ENCODE measurements at regions of chr11 and their contacts with region 1.

Region 1: GRCh38 chr11:61091373-61092279 is 10.7 kb upstream of the CD5 start:
- DNase-seq: peak; percentile 85
- H3K4me3 Mint-ChIP-seq: peak overlapping the region; percentile 96
- H3K27ac Mint-ChIP-seq: peak overlapping the region; percentile 99
- H3K4me1 Mint-ChIP-seq: peaks cover 72% of the 10 kb centered on the region
- H3K27me3 Mint-ChIP-seq: no peaks in the 10 kb centered on the region

Region 2: GRCh38 chr11:60786811-60787567 is 304.6 kb before region 1 on chr11:
- CTCF ChIA-PET with region 1: no interaction called
- POLR2A ChIA-PET with region 1: no interaction called
- intact Hi-C with region 1: no loop called
- DNase-seq: no peak
- H3K4me3 Mint-ChIP-seq: no peak overlapping the region
- H3K27ac Mint-ChIP-seq: no peak overlapping the region
- H3K4me1 Mint-ChIP-seq: no peaks in the 10 kb centered on the region
- H3K27me3 Mint-ChIP-seq: no peaks in the 10 kb centered on the region

Region 3: DNA sequence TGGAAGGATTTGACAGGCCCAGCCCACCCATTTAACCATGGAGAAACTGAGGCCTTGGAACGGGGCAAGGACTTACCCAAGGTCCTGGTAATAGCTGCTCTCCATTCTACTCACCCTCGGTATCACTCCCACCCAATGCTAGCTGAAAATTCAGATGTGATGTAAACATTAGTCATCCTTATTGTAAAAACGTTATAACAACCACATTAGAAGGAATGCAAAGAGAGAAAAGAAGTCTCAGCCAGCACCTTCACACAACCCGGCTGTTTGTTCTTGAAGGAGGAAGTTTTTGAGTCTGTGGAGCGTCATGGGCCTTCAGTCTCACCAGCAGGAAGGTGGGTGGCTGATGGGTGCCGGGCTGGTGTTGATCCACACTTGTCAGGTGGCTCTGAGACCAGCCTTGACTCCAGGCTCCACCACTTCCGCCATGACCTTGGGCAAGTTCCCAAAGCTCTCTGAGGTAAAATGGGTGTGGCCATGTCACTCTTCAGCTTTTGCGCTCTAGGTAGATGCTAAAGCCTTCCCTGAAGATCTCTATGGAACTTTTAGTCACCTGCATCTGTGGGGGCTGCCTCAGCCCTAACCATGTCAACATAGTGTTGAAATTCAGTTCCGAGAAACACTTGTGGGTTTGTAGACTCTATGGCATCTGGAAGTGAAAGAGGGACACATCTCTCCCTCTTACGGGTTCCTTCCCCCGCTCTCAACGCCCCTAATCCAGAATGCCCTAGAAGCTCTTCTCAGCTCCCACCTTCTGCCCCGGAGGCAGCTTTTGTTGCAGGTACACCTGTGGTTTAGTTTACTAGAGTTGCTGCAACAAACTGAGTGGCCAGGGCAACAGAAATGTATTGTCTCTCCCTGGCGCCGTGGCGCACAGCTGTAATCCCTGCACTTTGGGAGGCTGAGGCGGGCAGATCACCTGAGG is 105.4 kb before region 1 on chr11:
- CTCF ChIA-PET with region 1: interaction called, 4 read pairs
- POLR2A ChIA-PET with region 1: interaction called, 46 read pairs
- intact Hi-C with region 1: no loop called
- DNase-seq: peak; percentile 97
- H3K4me3 Mint-ChIP-seq: peak overlapping the region; percentile 84
- H3K27ac Mint-ChIP-seq: peak overlapping the region; percentile 99
- H3K4me1 Mint-ChIP-seq: peaks cover 91% of the 10 kb centered on the region
- H3K27me3 Mint-ChIP-seq: no peaks in the 10 kb centered on the region

Region 4: DNA sequence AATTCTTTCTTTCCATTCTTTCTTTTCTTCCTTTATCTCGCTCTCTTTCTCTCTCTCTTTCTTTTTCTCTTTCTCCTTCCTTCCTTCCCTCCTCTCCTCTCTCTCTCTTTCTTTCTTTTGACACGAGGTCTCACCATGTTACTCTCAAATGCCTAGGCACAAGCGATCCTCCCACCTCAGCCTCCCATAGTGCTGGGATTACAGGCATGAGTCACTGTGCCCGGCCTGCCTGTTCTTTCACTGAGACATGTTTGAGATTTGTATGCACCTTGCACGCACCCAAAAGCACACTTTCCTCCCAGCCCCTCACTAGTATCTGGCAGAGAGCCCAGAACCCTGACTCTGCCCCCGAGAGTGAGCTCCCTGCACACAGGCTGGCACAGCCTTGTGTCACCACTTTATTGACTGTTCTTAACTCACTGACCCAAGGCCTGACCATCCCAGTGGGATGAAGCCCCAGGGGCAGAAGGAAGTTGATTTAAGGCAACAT is 63.3 kb before region 1 on chr11:
- CTCF ChIA-PET with region 1: interaction called, 4 read pairs
- POLR2A ChIA-PET with region 1: interaction called, 17 read pairs
- intact Hi-C with region 1: no loop called
- DNase-seq: peak; percentile 88
- H3K4me3 Mint-ChIP-seq: peak overlapping the region; percentile 83
- H3K27ac Mint-ChIP-seq: peak overlapping the region; percentile 96
- H3K4me1 Mint-ChIP-seq: peaks cover 77% of the 10 kb centered on the region
- H3K27me3 Mint-ChIP-seq: no peaks in the 10 kb centered on the region

Region 5: GRCh38 chr11:61071208-61071681 is 20.4 kb before region 1 on chr11:
- CTCF ChIA-PET with region 1: interaction called, 7 read pairs
- POLR2A ChIA-PET with region 1: interaction called, 157 read pairs
- intact Hi-C with region 1: no loop called
- DNase-seq: peak; percentile 80
- H3K4me3 Mint-ChIP-seq: peak overlapping the region; percentile 62
- H3K27ac Mint-ChIP-seq: peak overlapping the region; percentile 94
- H3K4me1 Mint-ChIP-seq: peaks cover 89% of the 10 kb centered on the region
- H3K27me3 Mint-ChIP-seq: no peaks in the 10 kb centered on the region

Region 6: DNA sequence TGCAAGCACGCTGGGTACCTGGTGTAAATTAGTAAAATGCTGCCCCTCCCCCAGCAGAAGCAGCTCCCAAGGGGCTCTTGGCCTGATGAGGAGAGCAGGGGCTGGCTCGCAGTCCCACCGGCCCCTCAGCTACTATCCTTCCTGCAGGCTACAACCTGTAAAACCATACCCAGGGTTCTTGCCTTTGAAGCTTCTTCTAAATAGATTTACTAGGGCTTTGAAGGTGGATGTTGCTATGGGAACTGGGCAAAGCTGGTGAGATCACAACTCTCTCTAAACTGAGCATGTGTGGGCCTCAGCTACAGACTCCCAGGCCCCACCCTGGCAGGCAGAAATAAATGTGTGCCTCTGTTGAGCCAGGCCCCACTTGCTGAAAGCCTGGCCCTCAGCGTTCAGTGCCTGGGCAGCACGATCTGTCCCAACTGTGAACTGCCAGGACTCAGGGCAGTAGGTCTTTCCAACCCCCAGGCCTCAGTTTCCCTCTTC is 29.1 kb after region 1 on chr11:
- CTCF ChIA-PET with region 1: interaction called, 3 read pairs
- POLR2A ChIA-PET with region 1: interaction called, 114 read pairs
- intact Hi-C with region 1: no loop called
- DNase-seq: no peak
- H3K4me3 Mint-ChIP-seq: no peak overlapping the region
- H3K27ac Mint-ChIP-seq: peak overlapping the region; percentile 85
- H3K4me1 Mint-ChIP-seq: peaks cover 59% of the 10 kb centered on the region
- H3K27me3 Mint-ChIP-seq: no peaks in the 10 kb centered on the region

Region 7: DNA sequence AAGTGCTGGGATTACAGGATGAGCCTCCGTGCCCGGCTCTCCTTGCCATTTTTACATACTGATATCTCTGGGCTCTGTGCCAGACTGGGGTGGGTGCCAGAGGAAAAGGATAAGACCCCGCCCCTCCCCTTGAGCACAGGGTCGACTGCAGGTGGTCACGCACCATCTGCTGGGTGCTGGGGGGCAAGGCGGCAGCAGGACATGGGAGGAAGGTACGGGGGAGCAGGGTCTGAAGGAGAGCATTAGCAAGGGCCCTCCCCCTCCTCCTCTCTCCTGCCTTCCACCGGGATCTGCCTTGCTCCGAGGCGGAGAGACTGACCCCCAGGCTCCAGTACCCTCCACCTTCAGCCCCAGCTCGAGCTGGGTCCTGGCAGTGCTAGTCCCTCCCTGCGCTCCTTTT is 102.0 kb after region 1 on chr11:
- CTCF ChIA-PET with region 1: no interaction called
- POLR2A ChIA-PET with region 1: no interaction called
- intact Hi-C with region 1: no loop called
- DNase-seq: no peak
- H3K4me3 Mint-ChIP-seq: no peak overlapping the region
- H3K27ac Mint-ChIP-seq: no peak overlapping the region
- H3K4me1 Mint-ChIP-seq: no peaks in the 10 kb centered on the region
- H3K27me3 Mint-ChIP-seq: peaks cover 7% of the 10 kb centered on the region

Measured in activated CD4-positive, alpha-beta memory T cell treated with anti-CD3 and anti-CD28 coated beads for 36 hours (primary cell).